Activated naive CD4-positive, alpha-beta T cell treated with anti-CD3 and anti-CD28 coated beads, Interleukin-2, amount 10 ng/mL, durations not matched to agents 7 days and 5 days (primary cell): ENCODE measurements at regions of chr17 and their contacts with region 1.

Region 1: DNA sequence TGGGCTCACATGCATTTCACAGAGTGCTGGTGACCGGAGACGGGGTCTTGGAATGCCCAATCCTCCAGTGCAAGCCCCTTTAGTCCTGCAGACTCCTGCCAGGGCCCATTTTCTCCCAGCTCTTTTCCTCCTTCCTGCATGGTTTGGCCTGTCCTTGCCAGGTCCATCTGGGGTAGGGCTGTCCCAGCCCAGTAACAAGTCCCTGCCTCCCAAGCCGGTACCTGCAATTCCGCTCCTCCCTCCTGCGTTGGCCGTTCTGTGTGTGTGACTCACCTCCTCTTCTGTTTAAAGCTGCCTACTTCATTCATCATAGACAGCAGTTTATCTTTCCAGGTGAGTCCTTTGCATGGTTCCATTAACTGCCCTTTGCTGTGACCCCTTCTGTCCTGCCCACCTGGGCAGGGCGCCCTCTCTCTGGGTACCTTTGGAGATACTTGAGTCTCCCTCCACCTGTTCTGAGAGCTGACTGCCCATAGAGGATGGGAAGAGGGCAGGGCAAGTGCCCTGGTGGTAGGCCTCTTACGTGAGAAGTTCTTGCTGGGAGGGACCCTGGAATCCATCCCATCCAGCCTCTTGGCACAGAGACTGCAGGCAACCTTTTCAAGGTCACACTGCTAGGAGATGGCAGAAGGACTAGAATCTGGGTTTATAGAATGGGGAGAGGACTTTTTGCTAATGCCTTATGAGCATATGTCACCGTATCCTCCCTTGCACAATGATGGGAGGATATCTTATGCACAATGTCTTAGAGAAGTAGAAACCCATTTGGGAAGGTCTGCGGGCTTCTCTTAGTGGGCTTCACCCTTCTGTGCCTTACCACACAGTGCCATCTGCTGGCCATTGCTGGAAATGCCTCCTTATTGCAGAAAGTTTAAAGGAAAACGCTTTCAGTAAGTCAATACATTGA is 29.7 kb upstream of the LGALS9 start:
- DNase-seq: peak; percentile 89
- H3K4me3 Mint-ChIP-seq: no peak overlapping the region
- H3K27ac Mint-ChIP-seq: no peak overlapping the region
- H3K4me1 Mint-ChIP-seq: peaks cover 13% of the 10 kb centered on the region
- H3K27me3 Mint-ChIP-seq: no peaks in the 10 kb centered on the region

Region 2: DNA sequence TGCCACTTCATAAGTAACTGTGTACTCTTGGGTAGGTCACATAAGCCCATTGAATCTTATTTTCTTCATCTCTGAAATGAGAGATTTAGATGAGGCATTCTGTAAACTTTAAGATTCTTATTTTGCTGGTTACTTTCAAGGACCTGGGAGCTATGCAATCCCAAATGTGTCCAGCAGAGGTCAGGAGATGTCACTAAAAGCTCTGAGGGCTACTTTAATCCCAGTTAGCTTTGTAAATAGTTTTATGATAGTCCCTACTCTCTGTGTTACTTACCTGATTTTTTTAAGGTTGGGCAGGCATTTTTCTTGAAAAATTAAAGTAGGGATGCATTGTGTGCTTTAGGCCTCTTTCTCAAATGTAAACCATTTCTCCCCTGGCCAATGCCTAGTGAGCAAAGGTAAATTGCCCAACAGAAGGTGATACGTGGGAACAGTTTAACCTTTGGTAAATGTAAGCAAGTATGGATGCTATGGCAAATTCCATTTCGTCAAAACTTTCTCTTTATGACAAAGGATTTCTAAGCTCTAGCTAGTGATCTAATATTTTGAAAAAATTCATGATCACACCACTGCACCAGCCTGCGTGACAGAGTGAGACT is 364.5 kb before region 1 on chr17:
- CTCF ChIA-PET with region 1: interaction called, 90 read pairs
- DNase-seq: peak; percentile 84
- H3K4me3 Mint-ChIP-seq: no peak overlapping the region
- H3K27ac Mint-ChIP-seq: no peak overlapping the region
- H3K4me1 Mint-ChIP-seq: peaks cover 11% of the 10 kb centered on the region
- H3K27me3 Mint-ChIP-seq: peaks cover 42% of the 10 kb centered on the region

Region 3: DNA sequence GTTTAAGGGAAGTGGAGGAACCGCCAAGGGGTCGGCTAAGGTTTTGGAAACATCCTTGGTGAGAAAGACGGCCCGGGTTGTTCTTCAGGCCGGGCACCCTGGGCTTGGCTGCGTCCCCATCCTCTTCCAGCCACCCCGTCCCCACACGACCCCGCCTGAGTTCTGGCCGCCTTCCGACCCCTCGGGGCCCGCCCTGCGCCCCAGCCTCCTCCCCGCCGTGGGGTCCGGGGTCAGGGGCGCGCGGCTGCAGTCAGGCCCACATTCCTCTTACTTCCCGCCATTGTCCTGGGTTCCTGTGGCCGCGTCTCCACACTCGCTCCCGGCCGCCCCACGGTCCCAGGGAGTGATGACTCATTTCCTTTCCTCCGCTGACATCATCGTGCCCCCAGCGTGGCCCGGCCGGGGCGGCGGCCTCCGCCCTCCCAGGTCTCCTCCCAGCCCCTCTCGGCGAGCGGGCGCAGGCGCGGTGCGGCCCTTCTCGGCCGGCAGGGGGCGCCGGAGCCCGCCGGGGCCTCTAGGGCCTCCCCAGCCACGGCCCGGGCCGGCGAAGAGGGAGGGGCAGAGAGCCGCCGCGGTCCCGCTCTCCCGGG is 247.8 kb before region 1 on chr17:
- CTCF ChIA-PET with region 1: interaction called, 72 read pairs
- DNase-seq: peak; percentile 88
- H3K4me3 Mint-ChIP-seq: peak overlapping the region; percentile 76
- H3K27ac Mint-ChIP-seq: peak overlapping the region; percentile 83
- H3K4me1 Mint-ChIP-seq: peaks cover 35% of the 10 kb centered on the region
- H3K27me3 Mint-ChIP-seq: no peaks in the 10 kb centered on the region

Region 4: DNA sequence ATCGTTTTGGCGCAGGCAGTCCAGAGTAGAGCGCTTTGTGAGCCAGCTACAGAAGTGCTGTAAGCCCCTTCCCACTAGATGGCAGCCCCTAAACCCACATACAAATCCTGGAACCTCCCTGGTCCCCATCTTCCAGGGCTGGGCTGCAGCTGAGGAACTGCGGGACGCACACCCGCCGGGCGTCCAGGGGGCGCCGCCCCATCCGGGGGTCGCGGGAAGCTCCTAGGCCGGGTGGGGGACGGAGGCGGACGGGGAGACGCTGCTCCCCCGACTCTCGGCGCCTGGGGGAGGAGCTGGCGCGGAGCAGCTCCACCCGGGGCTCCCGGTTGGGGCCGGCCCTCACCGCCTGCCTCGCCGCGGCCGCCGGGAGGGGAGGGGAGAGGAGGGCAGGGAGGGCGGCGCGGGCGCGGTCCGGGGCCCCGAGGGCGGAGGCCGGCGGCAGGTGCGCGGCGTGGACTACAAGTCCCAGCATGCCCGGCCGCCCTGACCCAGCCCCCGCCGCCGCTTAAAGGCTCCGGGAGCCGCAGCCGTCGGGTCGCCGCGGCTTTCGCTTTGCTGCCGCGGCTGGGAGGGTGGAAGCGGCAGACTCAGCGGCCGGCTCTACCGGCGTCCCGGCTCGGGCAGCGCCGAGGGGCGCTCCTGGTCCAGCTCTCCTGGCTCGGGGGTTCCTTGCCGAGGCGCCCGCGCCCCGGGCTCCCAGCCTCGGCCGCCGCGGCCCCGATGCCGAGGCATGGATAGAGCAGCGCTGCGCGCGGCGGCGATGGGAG is 145.2 kb before region 1 on chr17 and contains the start of gene KSR1:
- CTCF ChIA-PET with region 1: interaction called, 23 read pairs
- DNase-seq: peak; percentile 89
- H3K4me3 Mint-ChIP-seq: peak within 1 kb of the TSS; percentile 82
- H3K27ac Mint-ChIP-seq: peak within 1 kb of the TSS; percentile 70
- H3K4me1 Mint-ChIP-seq: peaks cover 45% of the 10 kb centered on the region
- H3K27me3 Mint-ChIP-seq: peaks cover 32% of the 10 kb centered on the region

Region 5: DNA sequence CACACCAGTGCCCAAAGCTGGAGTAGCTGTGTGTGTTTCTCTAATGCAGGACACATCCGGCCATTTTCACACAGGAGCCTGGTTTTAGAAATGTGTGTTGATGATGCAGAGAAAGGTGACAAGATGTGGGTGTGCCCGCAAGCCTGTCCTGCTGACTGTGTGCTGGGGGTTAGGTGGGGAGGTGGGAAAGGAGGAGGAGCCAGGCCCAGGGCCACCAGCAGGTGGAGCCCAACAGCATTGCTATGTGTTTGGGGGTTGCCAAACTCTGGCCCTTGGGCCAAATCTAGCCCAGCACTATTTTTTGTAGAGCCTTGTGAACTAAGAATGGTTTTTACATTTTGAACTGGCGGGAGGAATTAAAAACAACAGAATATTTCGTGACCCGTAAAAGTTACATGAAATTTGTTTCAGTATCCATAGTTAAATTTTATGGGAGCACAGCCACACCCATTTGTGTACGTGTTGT is 32.0 kb before region 1 on chr17:
- CTCF ChIA-PET with region 1: interaction called, 18 read pairs
- DNase-seq: peak; percentile 58
- H3K4me3 Mint-ChIP-seq: no peak overlapping the region
- H3K27ac Mint-ChIP-seq: peak overlapping the region; percentile 3
- H3K4me1 Mint-ChIP-seq: peaks cover 59% of the 10 kb centered on the region
- H3K27me3 Mint-ChIP-seq: no peaks in the 10 kb centered on the region

Region 6: DNA sequence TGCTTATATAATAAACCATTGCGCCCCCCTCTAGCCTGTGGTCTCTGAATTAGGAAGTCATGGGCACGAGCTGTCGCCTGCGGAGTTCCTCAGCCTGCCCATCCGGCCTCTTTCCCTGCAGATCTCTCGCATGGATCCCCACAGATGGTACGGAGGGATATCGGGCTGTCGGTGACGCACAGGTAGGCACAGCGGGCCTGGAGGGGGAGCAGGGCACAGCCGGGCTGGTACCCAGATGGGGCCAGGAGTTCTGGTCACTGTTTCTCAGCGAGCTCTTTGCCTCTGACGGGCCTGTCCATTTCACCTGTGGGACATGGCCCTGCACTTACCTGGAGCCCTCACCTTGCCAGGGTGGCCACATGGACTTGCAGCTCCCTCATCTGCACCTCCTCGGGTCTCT is 13.0 kb before region 1 on chr17:
- CTCF ChIA-PET with region 1: interaction called, 15 read pairs
- DNase-seq: no peak
- H3K4me3 Mint-ChIP-seq: no peak overlapping the region
- H3K27ac Mint-ChIP-seq: no peak overlapping the region
- H3K4me1 Mint-ChIP-seq: no peaks in the 10 kb centered on the region
- H3K27me3 Mint-ChIP-seq: no peaks in the 10 kb centered on the region

Region 7: DNA sequence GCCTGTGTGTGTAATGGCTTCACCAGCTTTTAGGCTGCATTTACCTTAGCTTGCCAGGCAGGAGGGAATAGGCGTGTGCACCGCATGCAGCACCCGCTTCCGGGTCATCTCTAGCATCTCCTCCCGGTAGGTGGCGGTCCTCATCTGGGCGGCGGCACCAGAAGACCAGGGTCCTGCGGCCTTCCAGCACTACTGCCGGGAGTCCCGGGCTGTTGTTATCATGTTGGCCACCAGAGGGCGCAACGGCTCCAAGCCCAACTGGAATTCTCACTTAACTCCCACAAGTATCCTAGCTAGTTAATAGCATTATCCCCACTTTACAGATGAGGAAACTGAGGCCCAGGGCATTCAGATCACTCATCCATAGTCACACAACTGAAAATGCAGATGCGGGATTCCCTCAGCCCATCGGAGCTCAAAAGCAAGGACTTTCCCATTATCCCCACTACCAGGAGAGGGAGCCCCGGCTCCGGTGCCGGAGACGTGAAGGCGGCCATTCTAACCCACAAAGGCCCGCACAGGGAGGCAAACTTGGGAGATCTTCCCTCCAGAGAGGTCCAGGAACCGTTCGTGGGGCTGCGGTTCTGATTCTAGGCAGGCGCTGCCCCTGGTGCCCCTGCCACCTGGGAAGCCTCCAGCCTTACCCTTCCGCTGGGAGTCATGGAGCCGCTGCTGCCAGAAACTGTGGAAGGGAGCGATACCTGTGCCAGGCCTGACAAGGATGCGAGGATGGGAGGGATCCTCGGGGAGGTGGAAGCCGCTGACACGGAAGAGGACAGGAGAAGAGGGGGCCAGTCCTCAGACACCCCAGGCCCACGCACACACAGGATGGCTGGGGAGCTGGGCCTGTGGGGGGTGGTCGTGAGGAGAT is 53.6 kb after region 1 on chr17:
- CTCF ChIA-PET with region 1: interaction called, 153 read pairs
- DNase-seq: peak; percentile 78
- H3K4me3 Mint-ChIP-seq: no peak overlapping the region
- H3K27ac Mint-ChIP-seq: no peak overlapping the region
- H3K4me1 Mint-ChIP-seq: peaks cover 9% of the 10 kb centered on the region
- H3K27me3 Mint-ChIP-seq: peaks cover 13% of the 10 kb centered on the region